HEK293 (cell line): ENCODE measurements at regions of chr19 and their contacts with region 1.

Region 1: GRCh38 chr19:29771708-29772414 is 39.9 kb upstream of the CCNE1 start:
- H3K4me3 ChIP-seq: no peak overlapping the region
- H3K27ac ChIP-seq: no peak overlapping the region
- H3K4me1 ChIP-seq: peaks cover 3% of the 10 kb centered on the region; the same call in 1 of the 2 replicates
- CTCF ChIP-seq: peak; percentile 96

Region 2: DNA sequence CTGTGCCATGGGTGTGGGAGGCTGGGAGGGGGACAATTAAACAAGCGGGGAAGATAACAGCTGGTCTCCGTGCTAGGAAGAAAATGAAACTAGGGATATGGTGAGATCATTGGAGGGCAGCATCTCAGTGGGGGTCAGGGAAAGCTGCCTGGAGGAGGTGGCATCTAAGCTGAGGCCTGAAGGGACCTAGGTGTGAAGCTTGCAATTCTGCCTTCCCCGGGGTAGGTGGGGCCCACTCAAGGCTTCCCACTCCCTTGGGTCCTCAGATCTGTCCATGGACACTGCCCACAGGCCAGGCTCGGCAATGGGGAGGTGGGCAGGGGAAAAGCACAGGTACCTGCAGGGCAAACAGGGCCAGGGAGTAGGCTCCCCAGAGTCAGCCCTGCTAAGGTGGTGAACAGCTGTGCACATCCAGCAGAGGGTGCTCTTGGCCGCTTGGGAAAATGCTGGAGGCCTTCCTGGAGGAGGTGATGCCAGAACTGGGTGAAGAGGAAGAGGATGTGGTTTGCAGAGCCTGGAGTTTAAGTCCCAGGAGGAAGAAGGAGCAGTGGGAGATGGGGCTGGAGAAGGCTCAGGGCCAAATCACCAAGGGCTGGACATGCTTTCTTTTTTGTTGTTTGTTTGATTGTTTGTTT is 14.2 kb after region 1 on chr19:
- CTCF ChIA-PET with region 1: interaction called, 26 read pairs
- POLR2A ChIA-PET with region 1: no interaction called
- H3K4me3 ChIP-seq: no peak overlapping the region
- H3K27ac ChIP-seq: no peak overlapping the region
- H3K4me1 ChIP-seq: no peaks in the 10 kb centered on the region
- CTCF ChIP-seq: peak; percentile 64; the same call in 1 of the 2 replicates

Region 3: DNA sequence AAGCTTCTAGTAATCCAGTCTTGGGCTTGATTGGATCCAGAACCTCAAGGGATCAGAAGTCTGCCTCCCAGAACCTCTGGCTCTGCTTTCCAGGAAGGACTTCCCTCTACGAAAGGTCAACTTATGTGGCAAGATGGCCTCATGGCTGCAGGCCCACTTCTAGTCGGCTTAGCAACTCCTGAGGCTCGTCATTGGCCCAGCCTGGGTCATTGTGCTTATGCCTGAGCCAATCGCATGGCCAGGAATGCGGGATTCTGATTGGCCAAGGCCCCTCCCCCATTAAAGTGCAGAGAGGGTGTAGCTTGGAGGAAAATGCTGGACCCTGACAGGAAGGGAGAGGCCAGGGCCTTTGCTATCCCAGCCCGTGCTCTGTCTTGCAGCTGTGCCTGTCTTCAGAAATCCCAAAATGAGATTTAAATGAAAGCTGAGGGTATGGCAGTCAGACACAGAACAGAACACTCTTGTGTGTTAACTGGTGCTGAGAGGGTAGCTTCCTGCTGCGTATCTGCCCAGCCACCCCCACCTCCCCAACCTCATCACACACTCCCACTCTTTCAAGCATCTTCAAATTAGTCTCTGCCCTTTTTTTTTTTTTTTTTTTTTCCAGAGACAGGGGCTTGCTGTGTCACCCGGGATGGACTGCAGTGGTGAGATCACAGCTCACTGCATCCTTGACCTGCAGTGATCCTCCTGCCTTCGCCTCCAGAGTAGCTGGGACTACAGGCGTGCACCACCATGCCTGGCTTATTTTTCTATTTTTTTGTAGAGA is 34.4 kb after region 1 on chr19:
- CTCF ChIA-PET with region 1: interaction called, 10 read pairs
- POLR2A ChIA-PET with region 1: interaction called, 8 read pairs
- H3K4me3 ChIP-seq: no peak overlapping the region
- H3K27ac ChIP-seq: no peak overlapping the region
- H3K4me1 ChIP-seq: peaks cover 6% of the 10 kb centered on the region
- CTCF ChIP-seq: no peak

Region 4: GRCh38 chr19:29811125-29812079 is 39.5 kb after region 1 on chr19 and contains the start of gene CCNE1:
- CTCF ChIA-PET with region 1: interaction called, 10 read pairs
- POLR2A ChIA-PET with region 1: interaction called, 8 read pairs
- H3K4me3 ChIP-seq: peak within 1 kb of the TSS; percentile 47
- H3K27ac ChIP-seq: peak within 1 kb of the TSS; percentile 93
- H3K4me1 ChIP-seq: peaks cover 11% of the 10 kb centered on the region
- CTCF ChIP-seq: no peak

Region 5: GRCh38 chr19:29819986-29820385 is 48.1 kb after region 1 on chr19:
- CTCF ChIA-PET with region 1: interaction called, 10 read pairs
- POLR2A ChIA-PET with region 1: interaction called, 3 read pairs
- H3K4me3 ChIP-seq: no peak overlapping the region
- H3K27ac ChIP-seq: no peak overlapping the region
- H3K4me1 ChIP-seq: no peaks in the 10 kb centered on the region
- CTCF ChIP-seq: no peak

Region 6: GRCh38 chr19:29858000-29858596 is 86.2 kb after region 1 on chr19:
- CTCF ChIA-PET with region 1: interaction called, 15 read pairs
- POLR2A ChIA-PET with region 1: no interaction called
- H3K4me3 ChIP-seq: no peak overlapping the region
- H3K27ac ChIP-seq: no peak overlapping the region
- H3K4me1 ChIP-seq: peaks cover 10% of the 10 kb centered on the region
- CTCF ChIP-seq: peak; percentile 86

Region 7: DNA sequence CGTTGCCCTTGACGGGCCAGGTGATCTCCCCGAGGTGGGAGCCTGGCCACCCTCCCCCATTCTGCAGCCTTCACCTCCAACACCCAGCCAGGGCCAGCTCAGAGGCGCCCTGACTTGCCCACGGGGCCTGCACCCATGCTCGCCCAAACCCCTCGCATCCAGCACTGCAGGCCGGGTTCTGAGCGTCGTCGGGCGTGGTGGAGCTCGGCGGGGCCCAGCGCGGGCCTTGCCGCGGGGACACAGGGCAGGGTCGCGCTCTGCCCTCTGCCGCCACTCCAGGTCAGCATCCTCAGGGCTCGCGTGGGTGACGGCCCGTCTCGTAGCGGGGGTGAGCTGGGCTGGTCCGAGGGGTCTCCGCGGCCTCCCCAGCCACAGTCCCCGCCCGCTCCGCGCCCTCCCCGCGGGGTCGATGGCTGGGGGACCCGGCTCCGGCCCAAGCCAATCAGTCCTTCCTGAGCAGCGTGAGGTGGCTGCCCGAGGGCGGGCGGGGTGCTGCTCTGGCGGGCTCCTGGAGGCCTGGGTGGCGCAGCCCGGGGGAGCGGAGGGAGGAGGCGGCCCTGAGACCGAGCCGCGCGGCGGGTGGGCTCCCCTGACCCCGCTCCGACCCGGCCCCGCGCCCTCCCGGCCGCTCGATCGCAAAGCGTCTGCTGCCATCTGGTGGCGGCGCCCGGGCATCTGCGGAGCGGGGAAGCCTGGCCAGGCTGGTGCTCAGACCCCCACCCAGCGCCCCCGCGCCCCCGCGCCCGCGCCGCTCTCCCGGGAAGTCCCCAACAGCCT is 101.4 kb after region 1 on chr19:
- CTCF ChIA-PET with region 1: interaction called, 18 read pairs
- POLR2A ChIA-PET with region 1: no interaction called
- H3K4me3 ChIP-seq: peak overlapping the region; percentile 47
- H3K27ac ChIP-seq: peak overlapping the region; percentile 76; the same call in 1 of the 2 replicates
- H3K4me1 ChIP-seq: peaks cover 12% of the 10 kb centered on the region
- CTCF ChIP-seq: peak; percentile 86